ENCODE measurements at regions of chr4 and their contacts with region 1.

Region 1: GRCh38 chr4:173334085-173334772 is at the start of gene HMGB2:
- DNase-seq: peak; percentile 100
- H3K4me3 ChIP-seq: peak within 1 kb of the TSS; percentile 78 to 99 (median 98)
- H3K27ac ChIP-seq: peak within 1 kb of the TSS; percentile 83 to 94
- H3K4me1 ChIP-seq: peaks cover 2 to 40% (median 28%) of the 10 kb centered on the region in 4 experiments
- H3K27me3 ChIP-seq: no peaks in the 10 kb centered on the region

Region 2: GRCh38 chr4:172830295-172830764 is 503.9 kb before region 1 on chr4:
- CTCF ChIA-PET with region 1: no interaction called
- POLR2A ChIA-PET with region 1: no interaction called
- DNase-seq: peak; percentile 7 to 43 (median 36)
- H3K4me3 ChIP-seq: no peak overlapping the region
- H3K27ac ChIP-seq: no peak overlapping the region
- H3K4me1 ChIP-seq: no peaks in the 10 kb centered on the region
- H3K27me3 ChIP-seq: no peaks in the 10 kb centered on the region

Region 3: GRCh38 chr4:173370477-173371291 is 36.5 kb after region 1 on chr4 and contains the start of gene SAP30:
- CTCF ChIA-PET with region 1: interaction called, 18 read pairs
- POLR2A ChIA-PET with region 1: interaction called, 24 read pairs
- DNase-seq: peak; percentile 99
- H3K4me3 ChIP-seq: peak within 1 kb of the TSS; percentile 66 to 99 (median 92)
- H3K27ac ChIP-seq: peak within 1 kb of the TSS; percentile 79 to 88
- H3K4me1 ChIP-seq: peaks cover 4 to 36% (median 26%) of the 10 kb centered on the region in 4 experiments
- H3K27me3 ChIP-seq: no peaks in the 10 kb centered on the region